HepG2 (cell line): ENCODE measurements at regions of chr2 and their contacts with region 1.

Region 1: DNA sequence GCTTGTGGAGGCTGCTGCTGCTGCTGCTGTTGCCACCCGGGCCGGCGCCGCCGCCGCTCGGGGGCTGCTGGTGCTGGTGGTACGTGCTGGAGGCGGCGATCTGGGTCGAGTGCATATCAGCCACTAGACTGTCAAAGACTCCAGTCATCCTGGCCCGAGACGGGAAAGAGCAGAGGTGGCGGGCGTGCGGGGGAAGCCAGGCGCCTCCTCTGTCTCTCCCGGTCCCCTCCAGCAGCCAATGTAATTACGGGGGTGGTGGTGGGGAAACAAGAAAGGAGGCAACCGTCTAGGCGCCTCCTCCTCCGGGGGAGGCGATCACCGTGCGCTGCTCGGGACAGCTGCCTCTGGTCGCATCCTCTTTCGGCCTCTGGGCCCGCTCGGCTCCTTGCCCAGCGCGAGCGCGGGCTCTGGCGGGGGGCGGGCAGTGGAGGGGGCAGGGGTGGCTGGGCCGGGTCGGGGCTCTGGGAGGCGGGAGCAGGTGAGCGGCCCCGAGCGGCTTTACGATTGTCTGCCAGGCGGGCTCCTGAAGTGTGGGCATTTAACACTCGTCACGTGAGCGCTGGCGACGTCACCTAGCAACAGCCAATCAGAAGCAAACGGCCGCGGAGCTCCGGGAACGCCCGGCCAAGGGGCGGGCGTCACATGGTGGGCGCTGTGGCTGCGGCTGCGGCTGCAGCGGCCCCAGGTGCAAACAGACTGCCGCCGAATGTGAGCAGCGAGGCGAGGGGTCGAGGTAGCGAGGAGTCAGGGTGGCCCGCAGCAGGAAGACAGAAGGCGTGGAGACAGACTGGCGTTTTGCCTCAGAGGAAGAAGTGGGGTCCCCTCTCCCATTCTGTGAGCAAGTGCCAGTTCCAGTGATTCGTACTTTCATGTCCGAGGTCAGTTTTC is at the start of gene DLX2:
- DNase-seq: peak; percentile 93
- ATAC-seq: peak; percentile 67
- H3K4me3 ChIP-seq: peak within 1 kb of the TSS; percentile 61 to 75 (median 65)
- H3K27ac ChIP-seq: no peak within 1 kb of the TSS
- H3K4me1 ChIP-seq: peaks cover 62% of the 10 kb centered on the region
- H3K27me3 ChIP-seq: peaks cover 4 to 37% of the 10 kb centered on the region in 2 experiments
- CTCF ChIP-seq: peak; percentile 59
- EP300 ChIP-seq: peak in 1 of 2 experiments; percentile 25; a peak in 1 of 4 replicates
- POLR2A ChIP-seq: peak in 1 of 2 experiments; percentile 72; a peak in 2 of 4 replicates
- RAD21 ChIP-seq: peak; percentile 62
- total RNA-seq, gene DLX2: 0.15 TPM in 1 of 2 replicates, not detected in the other

Region 2: GRCh38 chr2:170973492-170974303 is 1128.9 kb before region 1 on chr2:
- CTCF ChIA-PET with region 1: no interaction called
- POLR2A ChIA-PET with region 1: no interaction called
- in situ Hi-C with region 1: no loop called
- intact Hi-C with region 1: loop called (anchors 10 kb)
- DNase-seq: peak; percentile 83
- ATAC-seq: peak; percentile 76
- H3K4me3 ChIP-seq: peak overlapping the region; percentile 62 to 83 (median 64)
- H3K27ac ChIP-seq: peak overlapping the region; percentile 92
- H3K4me1 ChIP-seq: peaks cover 58% of the 10 kb centered on the region
- H3K27me3 ChIP-seq: no peaks in the 10 kb centered on the region
- CTCF ChIP-seq: peak; percentile 92
- EP300 ChIP-seq: peak; percentile 37 to 70; a peak in 3 of 4 replicates
- POLR2A ChIP-seq: peak; percentile 61
- RAD21 ChIP-seq: peak; percentile 100

Region 3: GRCh38 chr2:171687287-171688128 is 415.1 kb before region 1 on chr2 and contains the start of gene DYNC1I2:
- CTCF ChIA-PET with region 1: no interaction called
- POLR2A ChIA-PET with region 1: interaction called, 18 read pairs
- in situ Hi-C with region 1: no loop called
- intact Hi-C with region 1: no loop called
- DNase-seq: peak; percentile 95
- ATAC-seq: peak; percentile 99
- H3K4me3 ChIP-seq: peak within 1 kb of the TSS; percentile 86 to 99 (median 95)
- H3K27ac ChIP-seq: peak within 1 kb of the TSS; percentile 70
- H3K4me1 ChIP-seq: peaks cover 12% of the 10 kb centered on the region
- H3K27me3 ChIP-seq: peaks cover 0 to 10% of the 10 kb centered on the region in 2 experiments; a peak in 1 of 5 replicates
- CTCF ChIP-seq: peak; percentile 18; the same call in 1 of the 2 replicates
- EP300 ChIP-seq: peak in 1 of 2 experiments; percentile 13; a peak in 1 of 4 replicates
- POLR2A ChIP-seq: peak; percentile 72 to 82
- RAD21 ChIP-seq: no peak; the same call in 1 of the 2 replicates
- total RNA-seq, gene DYNC1I2: 84.0 and 125 TPM in 2 replicates

Region 4: GRCh38 chr2:171811245-171811628 is 291.4 kb before region 1 on chr2:
- CTCF ChIA-PET with region 1: interaction called, 3 read pairs
- POLR2A ChIA-PET with region 1: no interaction called
- in situ Hi-C with region 1: no loop called
- intact Hi-C with region 1: loop called (anchors 1 kb)
- DNase-seq: peak; percentile 26
- ATAC-seq: no peak
- H3K4me3 ChIP-seq: no peak overlapping the region
- H3K27ac ChIP-seq: no peak overlapping the region
- H3K4me1 ChIP-seq: peaks cover 24% of the 10 kb centered on the region
- H3K27me3 ChIP-seq: no peaks in the 10 kb centered on the region
- CTCF ChIP-seq: peak; percentile 74
- EP300 ChIP-seq: no peak
- POLR2A ChIP-seq: no peak
- RAD21 ChIP-seq: peak; percentile 54; the same call in 1 of the 2 replicates

Region 5: DNA sequence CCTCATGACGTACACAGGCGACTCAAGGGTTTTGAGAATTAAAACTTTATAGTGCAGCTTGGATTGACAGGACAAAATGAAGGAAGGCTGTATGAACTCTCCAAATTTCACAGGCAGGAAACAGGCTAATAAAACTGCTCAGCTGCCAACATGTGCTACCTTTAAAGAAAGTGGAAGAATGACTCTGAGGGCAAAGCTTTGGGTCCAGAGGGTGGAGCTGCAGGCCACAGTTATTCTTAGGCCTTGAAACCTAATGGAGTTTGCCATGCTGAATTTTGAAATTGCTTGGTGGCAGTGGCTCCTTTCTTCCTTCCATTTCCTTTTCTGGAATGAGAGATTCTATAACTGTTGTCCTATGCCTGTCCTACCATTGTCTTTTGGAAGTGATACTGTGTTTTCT is 145.6 kb before region 1 on chr2:
- CTCF ChIA-PET with region 1: interaction called, 14 read pairs
- POLR2A ChIA-PET with region 1: no interaction called
- in situ Hi-C with region 1: loop called (anchors 5 kb)
- intact Hi-C with region 1: loop called (anchors 1 kb)
- DNase-seq: peak; percentile 24
- ATAC-seq: peak; percentile 68
- H3K4me3 ChIP-seq: no peak overlapping the region
- H3K27ac ChIP-seq: no peak overlapping the region
- H3K4me1 ChIP-seq: peaks cover 12% of the 10 kb centered on the region; the same call in 1 of the 2 replicates
- H3K27me3 ChIP-seq: no peaks in the 10 kb centered on the region
- CTCF ChIP-seq: peak; percentile 67
- EP300 ChIP-seq: no peak
- POLR2A ChIP-seq: no peak
- RAD21 ChIP-seq: peak; percentile 56

Region 6: DNA sequence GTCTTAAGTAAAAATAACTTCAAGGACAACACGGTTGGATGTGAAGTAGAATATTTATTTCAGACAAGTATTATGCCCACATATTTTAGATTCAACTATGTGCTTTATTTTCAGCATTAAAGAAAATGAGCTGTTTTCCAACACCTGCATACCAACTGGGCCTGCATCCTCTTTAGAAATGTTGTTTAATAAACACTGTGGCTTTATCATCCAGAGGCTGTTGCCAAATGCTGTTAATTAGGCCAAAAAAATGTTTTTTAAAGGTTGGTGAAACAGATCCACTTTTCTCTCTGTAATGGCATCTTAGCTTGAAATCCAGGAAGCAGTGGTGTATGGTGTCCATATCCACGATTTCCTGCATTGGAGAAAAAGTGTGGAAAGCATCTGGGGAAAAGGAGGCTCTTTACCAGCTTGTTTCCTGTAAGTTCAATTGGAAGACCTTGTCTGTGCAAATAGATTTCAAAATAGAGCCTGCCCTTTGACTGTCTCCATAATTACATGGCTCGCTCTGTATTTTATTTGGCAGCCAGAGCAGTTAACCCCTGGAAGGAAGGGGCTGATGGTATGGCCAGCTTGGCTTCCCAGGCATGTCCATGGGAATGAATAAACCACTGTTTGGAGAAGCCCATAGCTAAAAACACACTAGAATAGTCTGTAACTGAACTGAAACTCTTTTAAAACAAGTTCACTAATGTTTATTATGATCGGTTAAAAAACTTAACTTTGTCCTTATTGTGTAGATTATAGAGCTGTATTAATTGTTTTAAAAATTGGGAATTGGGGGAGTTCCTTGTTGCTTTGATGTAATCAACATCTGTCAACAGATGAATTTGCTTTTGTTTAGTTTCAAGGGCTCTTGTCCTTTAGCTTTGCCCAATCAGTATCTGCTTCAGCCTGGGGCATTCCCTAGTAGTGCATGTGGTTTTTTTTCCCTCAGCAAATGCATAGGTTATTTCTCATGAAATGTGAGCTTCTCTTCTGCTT is 50.3 kb before region 1 on chr2:
- CTCF ChIA-PET with region 1: no interaction called
- POLR2A ChIA-PET with region 1: interaction called, 15 read pairs
- in situ Hi-C with region 1: no loop called
- intact Hi-C with region 1: loop called (anchors 2 kb)
- DNase-seq: peak; percentile 98
- ATAC-seq: peak; percentile 98
- H3K4me3 ChIP-seq: peak overlapping the region; percentile 5 to 32 (median 28); a peak in 4 of 6 replicates
- H3K27ac ChIP-seq: peak overlapping the region; percentile 60
- H3K4me1 ChIP-seq: peaks cover 63% of the 10 kb centered on the region
- H3K27me3 ChIP-seq: no peaks in the 10 kb centered on the region
- CTCF ChIP-seq: no peak
- EP300 ChIP-seq: peak; percentile 86 to 96; a peak in 3 of 4 replicates
- POLR2A ChIP-seq: no peak
- RAD21 ChIP-seq: peak; percentile 55